CD4-positive, alpha-beta memory T cell (primary cell): ENCODE measurements at regions of chr19 and their contacts with region 1.

Region 1: DNA sequence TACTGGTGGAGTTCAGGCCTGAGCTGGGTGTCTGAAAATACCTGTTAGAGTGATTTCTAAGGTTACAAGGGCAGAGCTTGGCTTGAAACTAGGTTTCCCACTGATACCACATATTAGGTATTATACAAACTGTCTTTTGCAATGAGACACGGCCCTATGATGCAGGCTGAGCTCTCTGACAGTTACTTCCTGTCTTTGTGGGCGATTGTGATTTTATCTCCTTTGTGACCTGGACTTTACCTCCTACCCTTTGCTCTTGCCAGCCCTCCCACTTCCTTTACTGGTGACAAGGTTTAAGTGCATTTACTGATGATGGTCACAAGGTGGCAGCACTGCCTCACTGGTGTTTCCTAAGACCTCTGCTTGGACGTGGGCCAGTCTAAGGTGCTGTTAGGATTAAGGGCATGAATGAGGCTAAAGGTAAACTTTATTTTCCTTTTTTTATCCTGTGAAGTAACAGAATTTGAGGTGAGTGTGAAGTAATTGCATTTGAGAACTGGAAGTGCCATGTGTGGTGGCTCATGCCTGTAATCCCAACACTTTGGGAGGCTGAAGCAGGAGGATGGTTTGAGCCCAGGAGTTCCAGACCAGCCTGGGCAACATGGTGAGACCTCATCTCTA is 7.7 kb upstream of the CXCL17 start:
- DNase-seq: peak; percentile 87 to 93 (median 91)
- H3K4me3 ChIP-seq: no peak overlapping the region
- H3K4me3 Mint-ChIP-seq: no peak overlapping the region
- H3K27ac ChIP-seq: peak overlapping the region; percentile 77
- H3K27ac Mint-ChIP-seq: no peak overlapping the region
- H3K4me1 ChIP-seq: peaks cover 25% of the 10 kb centered on the region
- H3K4me1 Mint-ChIP-seq: peaks cover 0 to 2% (median under 1%) of the 10 kb centered on the region in 4 donors
- H3K27me3 ChIP-seq: no peaks in the 10 kb centered on the region
- H3K27me3 Mint-ChIP-seq: no peaks in the 10 kb centered on the region

Region 2: DNA sequence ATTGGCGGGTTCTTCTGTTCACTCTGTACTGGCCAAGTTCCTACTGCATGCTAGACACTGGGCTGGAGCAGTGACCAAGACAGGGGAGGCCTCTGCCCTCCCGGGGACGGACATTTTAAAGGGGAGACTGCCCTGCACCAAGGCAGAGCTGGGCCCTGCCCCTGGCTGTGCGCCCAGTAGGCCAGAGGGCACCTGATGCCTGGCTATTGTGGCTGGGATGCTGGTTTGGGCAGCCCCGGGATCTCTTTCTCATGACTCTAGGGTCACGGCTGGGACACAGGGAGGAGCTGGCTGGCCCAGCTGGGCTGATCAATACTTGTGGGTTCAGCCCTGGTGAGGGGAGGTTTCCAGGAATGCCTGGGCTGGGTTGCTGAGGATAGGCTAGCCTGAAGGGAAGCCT is 40.9 kb before region 1 on chr19:
- CTCF ChIA-PET with region 1: no interaction called
- POLR2A ChIA-PET with region 1: no interaction called
- intact Hi-C with region 1: no loop called
- DNase-seq: no peak
- H3K4me3 ChIP-seq: no peak overlapping the region
- H3K4me3 Mint-ChIP-seq: no peak overlapping the region
- H3K27ac ChIP-seq: no peak overlapping the region
- H3K27ac Mint-ChIP-seq: no peak overlapping the region
- H3K4me1 ChIP-seq: no peaks in the 10 kb centered on the region
- H3K4me1 Mint-ChIP-seq: peaks cover 0 to 5% (median under 1%) of the 10 kb centered on the region in 4 donors
- H3K27me3 ChIP-seq: no peaks in the 10 kb centered on the region
- H3K27me3 Mint-ChIP-seq: no peaks in the 10 kb centered on the region

Region 3: DNA sequence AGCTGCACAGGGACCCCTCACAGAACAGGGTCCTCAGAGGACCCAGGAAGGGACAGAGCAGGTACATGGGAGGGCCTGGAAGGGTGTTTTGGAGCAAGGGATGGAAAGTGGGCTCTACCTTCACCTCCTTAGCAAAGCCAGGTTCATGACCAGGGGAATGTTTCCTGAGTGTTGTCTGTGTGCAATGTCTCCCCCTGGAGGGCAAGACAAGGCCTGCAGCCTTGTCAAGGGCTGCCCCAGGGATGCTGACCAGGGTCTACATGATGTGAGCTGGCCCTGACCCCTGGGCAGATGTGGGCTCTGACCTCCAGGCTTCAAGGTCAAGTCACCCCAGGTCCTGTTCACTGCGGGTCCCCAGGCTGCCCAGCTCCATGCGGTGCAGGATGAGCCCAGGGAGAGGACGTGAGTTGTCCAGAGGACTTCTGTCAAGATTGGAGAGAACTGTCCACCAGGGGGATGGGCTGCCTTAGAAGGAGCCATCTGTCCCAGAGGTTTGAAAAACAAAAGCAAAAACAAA is 78.9 kb after region 1 on chr19:
- CTCF ChIA-PET with region 1: interaction called, 167 read pairs
- POLR2A ChIA-PET with region 1: interaction called, 30 read pairs
- intact Hi-C with region 1: loop called (anchors 1 kb)
- DNase-seq: peak; percentile 64 to 72 (median 68)
- H3K4me3 ChIP-seq: peak overlapping the region; percentile 48 to 63
- H3K4me3 Mint-ChIP-seq: peak overlapping the region; percentile 81 to 94 (median 88)
- H3K27ac ChIP-seq: peak overlapping the region; percentile 47
- H3K27ac Mint-ChIP-seq: peak overlapping the region; percentile 75 to 96 (median 88)
- H3K4me1 ChIP-seq: peaks cover 35% of the 10 kb centered on the region
- H3K4me1 Mint-ChIP-seq: peaks cover 23 to 40% (median 33%) of the 10 kb centered on the region in 4 donors
- H3K27me3 ChIP-seq: no peaks in the 10 kb centered on the region
- H3K27me3 Mint-ChIP-seq: no peaks in the 10 kb centered on the region

Region 4: DNA sequence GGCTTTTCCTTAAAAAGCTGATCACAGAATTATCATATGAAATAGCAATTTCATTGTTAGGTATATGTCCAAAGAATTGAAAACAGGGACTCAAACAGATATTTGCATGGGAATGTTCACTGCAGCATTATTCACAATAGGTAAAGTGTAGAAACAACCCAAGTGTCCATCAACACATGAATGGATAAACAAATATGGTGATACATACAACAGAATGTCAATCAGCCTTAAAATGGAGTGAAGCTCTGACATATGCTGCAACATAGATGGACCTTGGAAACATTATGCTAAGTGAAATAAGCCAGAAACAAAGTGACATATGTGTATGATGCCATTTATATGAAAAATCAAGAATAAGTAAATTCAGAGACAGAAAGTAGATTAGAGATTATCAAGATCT is 84.0 kb after region 1 on chr19:
- CTCF ChIA-PET with region 1: interaction called, 167 read pairs
- POLR2A ChIA-PET with region 1: interaction called, 30 read pairs
- intact Hi-C with region 1: loop called (anchors 1 kb)
- DNase-seq: no peak
- H3K4me3 ChIP-seq: no peak overlapping the region
- H3K4me3 Mint-ChIP-seq: no peak overlapping the region
- H3K27ac ChIP-seq: no peak overlapping the region
- H3K27ac Mint-ChIP-seq: no peak overlapping the region
- H3K4me1 ChIP-seq: peaks cover 2% of the 10 kb centered on the region
- H3K4me1 Mint-ChIP-seq: peaks cover under 1 to 6% (median 2%) of the 10 kb centered on the region in 4 donors
- H3K27me3 ChIP-seq: no peaks in the 10 kb centered on the region
- H3K27me3 Mint-ChIP-seq: no peaks in the 10 kb centered on the region

Region 5: DNA sequence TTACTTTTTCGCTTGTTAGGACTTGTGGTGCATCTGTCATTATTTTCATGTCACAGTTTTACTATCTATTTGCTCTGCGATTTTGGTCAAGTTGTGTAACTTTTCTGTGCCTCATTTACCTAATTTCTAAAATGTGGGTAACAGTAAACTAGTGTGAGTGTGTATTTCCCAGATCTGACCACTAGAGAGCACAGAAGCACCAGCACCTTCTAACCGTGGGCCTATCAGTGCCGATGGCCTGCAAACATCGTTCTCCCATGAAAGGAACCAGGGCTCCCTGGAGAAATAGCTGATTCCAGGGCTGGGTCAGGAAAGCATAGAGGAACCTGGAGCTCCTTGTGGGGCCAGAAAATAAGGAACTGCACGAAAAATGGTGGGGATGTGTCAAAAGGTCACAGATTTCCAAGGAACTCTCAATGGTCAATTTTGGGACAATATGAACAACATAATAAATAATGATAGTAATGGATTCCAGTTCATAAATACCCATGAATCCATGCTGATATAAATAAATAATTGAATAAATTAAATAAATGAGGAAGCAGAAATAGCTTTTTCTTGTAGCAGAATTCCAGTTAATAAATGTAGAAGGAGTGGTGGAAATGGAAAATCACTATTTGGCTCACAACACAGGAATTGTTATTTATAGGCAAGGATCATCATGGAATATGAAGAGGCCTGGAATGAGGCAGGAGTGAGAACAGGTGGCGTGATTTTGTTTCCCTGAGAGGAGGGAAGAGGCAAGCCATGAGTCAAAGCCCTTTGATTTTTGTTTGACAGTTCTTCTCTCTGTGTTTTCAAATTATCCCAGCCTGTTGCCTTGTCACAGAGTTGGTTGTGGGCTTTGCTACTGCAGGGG is 113.2 kb after region 1 on chr19:
- CTCF ChIA-PET with region 1: interaction called, 7 read pairs
- POLR2A ChIA-PET with region 1: no interaction called
- intact Hi-C with region 1: loop called (anchors 1 kb)
- DNase-seq: peak in 3 of 5 donors; percentile 9 to 28 (median 11)
- H3K4me3 ChIP-seq: no peak overlapping the region
- H3K4me3 Mint-ChIP-seq: no peak overlapping the region
- H3K27ac ChIP-seq: no peak overlapping the region
- H3K27ac Mint-ChIP-seq: peak overlapping the region in 1 of 7 donors; percentile 17
- H3K4me1 ChIP-seq: no peaks in the 10 kb centered on the region
- H3K4me1 Mint-ChIP-seq: peaks cover 0 to 17% (median 4%) of the 10 kb centered on the region in 4 donors
- H3K27me3 ChIP-seq: no peaks in the 10 kb centered on the region
- H3K27me3 Mint-ChIP-seq: peaks cover 8 to 13% of the 10 kb centered on the region in 2 donors

Region 6: GRCh38 chr19:42596391-42597072 is 146.1 kb after region 1 on chr19:
- CTCF ChIA-PET with region 1: interaction called, 21 read pairs
- POLR2A ChIA-PET with region 1: no interaction called
- intact Hi-C with region 1: loop called (anchors 1 kb)
- DNase-seq: peak in 4 of 5 donors; percentile 16 to 37 (median 22)
- H3K4me3 ChIP-seq: no peak overlapping the region
- H3K4me3 Mint-ChIP-seq: peak overlapping the region in 1 of 8 donors; percentile 2
- H3K27ac ChIP-seq: no peak overlapping the region
- H3K27ac Mint-ChIP-seq: no peak overlapping the region
- H3K4me1 ChIP-seq: no peaks in the 10 kb centered on the region
- H3K4me1 Mint-ChIP-seq: peaks cover 0 to 6% (median 4%) of the 10 kb centered on the region in 4 donors
- H3K27me3 ChIP-seq: no peaks in the 10 kb centered on the region
- H3K27me3 Mint-ChIP-seq: peaks cover 8 to 18% of the 10 kb centered on the region in 2 donors

Region 7: DNA sequence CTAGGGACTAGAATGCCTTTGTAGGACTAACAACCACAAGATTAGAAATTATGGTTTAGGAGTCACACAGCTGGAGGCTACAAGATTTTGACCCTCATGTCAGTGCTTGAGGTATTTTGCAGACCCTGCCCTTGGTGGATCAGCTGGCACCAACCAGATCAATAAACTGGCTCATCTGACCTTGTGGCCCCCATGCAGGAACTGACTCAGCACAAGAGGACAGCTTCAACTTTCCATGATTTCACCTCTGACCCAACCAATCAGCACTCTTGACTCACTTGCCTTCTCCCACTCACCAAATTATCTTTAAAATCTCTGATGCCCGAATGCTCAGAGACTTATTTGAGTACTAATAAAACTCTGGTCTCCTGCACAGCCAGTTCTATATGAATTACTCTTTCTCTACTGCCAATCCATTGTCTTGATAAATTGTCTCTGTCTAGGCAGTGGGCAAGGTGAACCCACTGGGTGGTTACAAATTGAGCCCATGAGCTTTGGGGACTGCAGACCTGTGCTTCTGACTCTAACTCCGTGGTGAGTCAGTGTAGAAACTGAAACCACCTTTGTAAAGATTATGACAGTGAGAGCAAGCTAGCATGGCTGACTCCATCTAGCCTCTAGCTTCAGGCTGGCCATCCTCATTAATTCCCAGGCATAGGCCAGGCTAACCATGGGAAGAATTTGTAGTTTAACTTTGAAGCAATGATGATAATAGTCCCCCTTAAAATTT is 178.2 kb after region 1 on chr19:
- CTCF ChIA-PET with region 1: no interaction called
- POLR2A ChIA-PET with region 1: no interaction called
- intact Hi-C with region 1: no loop called
- DNase-seq: no peak
- H3K4me3 ChIP-seq: no peak overlapping the region
- H3K4me3 Mint-ChIP-seq: no peak overlapping the region
- H3K27ac ChIP-seq: no peak overlapping the region
- H3K27ac Mint-ChIP-seq: no peak overlapping the region
- H3K4me1 ChIP-seq: no peaks in the 10 kb centered on the region
- H3K4me1 Mint-ChIP-seq: peaks cover 0 to 6% (median under 1%) of the 10 kb centered on the region in 4 donors
- H3K27me3 ChIP-seq: no peaks in the 10 kb centered on the region
- H3K27me3 Mint-ChIP-seq: peaks cover 12 to 15% of the 10 kb centered on the region in 2 donors

Region 8: DNA sequence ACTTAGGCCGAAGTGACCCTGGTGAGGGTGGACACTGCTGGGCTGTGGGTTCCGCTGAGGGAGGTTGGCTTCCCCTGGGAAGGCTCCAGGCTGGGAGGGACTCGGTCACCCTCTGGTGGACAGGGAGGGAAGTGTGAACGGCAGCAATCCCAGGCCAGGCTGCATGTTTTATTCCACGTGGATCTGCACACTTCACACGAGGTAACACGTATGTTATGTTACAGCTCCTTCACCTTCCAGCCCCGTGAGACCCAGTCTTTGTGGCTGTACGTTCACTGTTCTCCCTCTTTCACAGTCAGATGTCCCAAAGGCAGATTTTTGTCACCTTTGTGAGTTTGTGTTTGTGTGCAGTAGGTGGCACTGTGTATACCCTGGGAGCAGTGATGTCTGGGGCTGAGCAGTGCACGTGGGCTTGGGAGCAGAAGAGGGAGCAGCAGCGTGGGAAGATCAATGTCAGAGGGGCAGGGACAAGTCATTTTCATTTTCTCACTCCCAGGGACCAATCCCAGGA is 469.1 kb after region 1 on chr19:
- CTCF ChIA-PET with region 1: no interaction called
- POLR2A ChIA-PET with region 1: no interaction called
- intact Hi-C with region 1: no loop called
- DNase-seq: no peak
- H3K4me3 ChIP-seq: no peak overlapping the region
- H3K4me3 Mint-ChIP-seq: no peak overlapping the region
- H3K27ac ChIP-seq: no peak overlapping the region
- H3K27ac Mint-ChIP-seq: peak overlapping the region in 1 of 7 donors; percentile 61
- H3K4me1 ChIP-seq: no peaks in the 10 kb centered on the region
- H3K4me1 Mint-ChIP-seq: no peaks in the 10 kb centered on the region
- H3K27me3 ChIP-seq: no peaks in the 10 kb centered on the region
- H3K27me3 Mint-ChIP-seq: peaks cover 4 to 6% of the 10 kb centered on the region in 2 donors